ENCODE measurements at regions of chr11 and their contacts with region 1.

Region 1: DNA sequence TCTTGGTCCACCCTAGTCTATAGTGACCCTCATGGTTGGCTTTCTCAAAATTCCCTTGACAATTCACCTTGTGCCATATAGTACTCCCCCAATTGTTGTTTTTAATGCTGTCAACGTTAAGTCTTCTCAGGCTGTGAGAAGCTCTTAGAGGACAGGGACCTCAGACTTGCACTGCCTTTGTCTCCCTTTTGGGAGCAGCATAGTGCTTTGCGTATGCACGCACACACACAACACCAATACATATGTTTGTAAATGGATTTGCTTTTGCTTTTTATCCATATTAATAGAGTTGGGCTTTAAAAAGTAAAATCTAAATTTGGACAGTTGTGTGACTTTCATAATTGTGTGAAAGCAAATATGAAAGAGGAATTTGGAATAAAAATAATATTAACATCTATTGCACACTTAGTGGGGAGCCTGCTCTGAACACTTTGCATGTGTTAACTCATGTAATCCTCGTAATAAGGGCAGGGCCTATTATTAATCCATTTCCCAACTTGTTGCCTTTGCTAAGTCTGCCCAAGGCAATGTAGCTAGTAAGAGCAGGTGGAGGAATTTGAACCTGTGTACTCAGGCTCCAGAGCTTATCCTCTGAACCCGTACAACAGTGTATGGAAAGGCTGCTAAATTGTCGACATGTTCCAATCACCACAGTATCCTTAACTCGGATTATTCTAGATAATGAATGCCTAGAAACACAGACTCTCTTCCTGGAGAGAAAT is 257.7 kb upstream of the NARS2 start:
- ATAC-seq: no peak
- H3K4me3 ChIP-seq: no peak overlapping the region
- H3K27ac ChIP-seq: no peak overlapping the region
- H3K4me1 ChIP-seq: peaks cover 16 to 27% of the 10 kb centered on the region in 2 donors

Region 2: DNA sequence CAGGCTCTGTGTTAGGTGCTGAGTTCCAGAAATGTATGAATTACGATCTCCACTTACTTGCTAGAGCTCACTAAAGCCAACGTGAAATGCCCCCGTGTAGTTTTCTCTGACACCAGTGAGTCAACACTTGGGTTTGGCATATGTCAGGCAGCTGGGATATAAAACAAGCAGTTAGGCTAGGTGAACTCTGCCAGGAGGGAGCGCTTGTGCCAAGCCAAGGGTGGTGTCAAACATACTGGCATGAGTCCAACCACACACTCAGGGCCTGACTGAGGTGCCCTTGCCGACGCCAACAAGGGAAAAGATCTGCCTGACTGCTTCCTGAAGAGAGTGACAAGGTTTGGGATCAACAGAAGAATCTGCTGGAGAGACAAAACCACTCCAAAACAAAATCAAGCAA is 90.0 kb before region 1 on chr11:
- in situ Hi-C with region 1: loop called in 1 of 9 experiments (anchors 25 kb)
- ATAC-seq: no peak
- H3K4me3 ChIP-seq: no peak overlapping the region
- H3K27ac ChIP-seq: no peak overlapping the region
- H3K4me1 ChIP-seq: peaks cover 0 to 11% of the 10 kb centered on the region in 2 donors

Region 3: DNA sequence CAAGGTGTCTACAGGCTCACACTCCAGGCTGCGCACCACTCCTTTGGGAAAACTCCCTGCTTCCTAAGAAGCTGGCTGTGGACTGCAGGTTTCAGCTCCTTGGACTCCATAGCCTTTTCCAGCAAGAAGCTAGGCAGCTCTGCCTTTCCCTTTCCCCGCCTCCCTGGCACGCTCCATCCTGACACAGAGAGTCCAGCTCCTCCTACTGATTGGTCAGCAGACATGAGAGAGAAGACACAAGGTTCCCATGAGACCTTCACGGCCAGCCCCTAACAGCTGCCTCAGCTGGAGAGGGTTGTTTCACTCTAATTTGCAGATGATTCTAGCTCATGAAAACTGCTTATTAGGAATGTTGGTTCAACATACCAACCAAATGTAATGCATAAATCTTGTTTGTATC is 580.9 kb after region 1 on chr11:
- in situ Hi-C with region 1: no loop called
- ATAC-seq: peak; percentile 94 to 100 (median 100)
- H3K4me3 ChIP-seq: no peak overlapping the region
- H3K27ac ChIP-seq: peak overlapping the region; percentile 67 to 79
- H3K4me1 ChIP-seq: peaks cover 14 to 36% of the 10 kb centered on the region in 2 donors